Caco-2 (cell line): ENCODE measurements at regions of chr1 and their contacts with region 1.

Region 1: DNA sequence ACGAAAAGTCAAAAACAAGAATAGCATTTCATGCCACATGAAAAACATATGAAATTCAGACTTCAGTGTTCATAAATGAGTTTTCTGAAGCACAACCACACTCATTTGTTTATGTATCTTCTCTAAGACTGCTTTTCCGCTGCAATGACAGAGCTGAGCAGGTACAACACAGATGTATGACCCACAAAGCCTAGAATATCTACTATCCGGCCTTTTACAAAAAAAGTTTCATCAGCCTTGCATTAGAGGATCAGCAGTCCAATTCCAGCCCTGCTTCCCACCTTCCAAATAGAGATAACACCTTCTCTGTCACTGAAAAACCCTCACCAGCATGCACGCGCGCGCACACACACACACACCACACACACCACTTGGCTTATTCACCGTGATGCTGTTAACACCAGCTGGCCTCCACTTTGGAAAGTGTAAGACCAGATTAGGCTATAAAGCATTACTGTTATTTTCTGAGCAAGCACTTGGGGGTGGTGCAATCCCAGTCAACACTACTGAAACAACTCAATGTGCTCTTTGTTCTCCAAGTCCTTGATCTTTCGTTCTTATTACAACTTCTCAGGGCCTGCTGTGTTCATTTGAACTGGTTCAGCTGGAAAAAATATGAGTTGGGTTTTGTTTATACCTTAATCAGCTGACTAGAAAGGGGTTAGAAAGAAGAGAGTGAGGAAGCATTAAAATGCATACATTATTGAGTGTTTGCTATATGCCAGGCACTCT is 90.0 kb downstream of the GLUL start:
- DNase-seq: peak; percentile 50 to 61
- H3K4me3 ChIP-seq: no peak overlapping the region
- H3K4me3 Mint-ChIP-seq: no peak overlapping the region
- H3K27ac Mint-ChIP-seq: peak overlapping the region; percentile 29
- H3K4me1 ChIP-seq: peaks cover 30% of the 10 kb centered on the region
- H3K4me1 Mint-ChIP-seq: peaks cover 31% of the 10 kb centered on the region
- H3K27me3 ChIP-seq: no peaks in the 10 kb centered on the region
- H3K27me3 Mint-ChIP-seq: no peaks in the 10 kb centered on the region
- CTCF ChIP-seq: no peak

Region 2: GRCh38 chr1:182185813-182186756 is 115.5 kb before region 1 on chr1:
- CTCF ChIA-PET with region 1: no interaction called
- POLR2A ChIA-PET with region 1: no interaction called
- intact Hi-C with region 1: no loop called
- DNase-seq: peak in 1 of 2 experiments; percentile 23
- H3K4me3 ChIP-seq: no peak overlapping the region
- H3K4me3 Mint-ChIP-seq: no peak overlapping the region
- H3K27ac Mint-ChIP-seq: peak overlapping the region; percentile 46
- H3K4me1 ChIP-seq: peaks cover 16% of the 10 kb centered on the region
- H3K4me1 Mint-ChIP-seq: peaks cover 4% of the 10 kb centered on the region
- H3K27me3 ChIP-seq: no peaks in the 10 kb centered on the region
- H3K27me3 Mint-ChIP-seq: no peaks in the 10 kb centered on the region
- CTCF ChIP-seq: no peak

Region 3: DNA sequence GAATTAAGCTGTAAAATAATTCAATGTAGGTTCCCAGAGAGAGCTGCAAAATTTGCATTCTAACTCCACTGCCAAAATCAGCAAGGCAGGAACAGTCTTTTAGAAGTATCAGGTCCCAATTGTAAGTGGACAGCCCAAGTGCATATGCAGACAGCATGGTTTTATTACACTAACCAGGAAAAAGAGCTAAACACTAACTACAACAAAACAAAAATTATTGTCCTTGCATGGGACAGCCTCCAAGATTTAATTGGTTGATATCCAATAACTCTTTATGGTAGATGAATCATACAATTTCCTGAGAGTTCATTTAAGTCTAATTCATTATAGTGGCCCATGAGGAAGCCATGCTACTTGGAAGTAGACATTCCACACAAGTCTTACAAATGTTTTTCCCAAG is 85.9 kb before region 1 on chr1:
- CTCF ChIA-PET with region 1: no interaction called
- POLR2A ChIA-PET with region 1: no interaction called
- intact Hi-C with region 1: no loop called
- DNase-seq: no peak
- H3K4me3 ChIP-seq: no peak overlapping the region
- H3K4me3 Mint-ChIP-seq: no peak overlapping the region
- H3K27ac Mint-ChIP-seq: no peak overlapping the region
- H3K4me1 ChIP-seq: no peaks in the 10 kb centered on the region
- H3K4me1 Mint-ChIP-seq: peaks cover 23% of the 10 kb centered on the region
- H3K27me3 ChIP-seq: no peaks in the 10 kb centered on the region
- H3K27me3 Mint-ChIP-seq: no peaks in the 10 kb centered on the region
- CTCF ChIP-seq: no peak

Region 4: GRCh38 chr1:182259229-182259872 is 42.3 kb before region 1 on chr1:
- CTCF ChIA-PET with region 1: no interaction called
- POLR2A ChIA-PET with region 1: no interaction called
- intact Hi-C with region 1: no loop called
- DNase-seq: no peak
- H3K4me3 ChIP-seq: no peak overlapping the region
- H3K4me3 Mint-ChIP-seq: no peak overlapping the region
- H3K27ac Mint-ChIP-seq: no peak overlapping the region
- H3K4me1 ChIP-seq: no peaks in the 10 kb centered on the region
- H3K4me1 Mint-ChIP-seq: no peaks in the 10 kb centered on the region
- H3K27me3 ChIP-seq: no peaks in the 10 kb centered on the region
- H3K27me3 Mint-ChIP-seq: no peaks in the 10 kb centered on the region
- CTCF ChIP-seq: no peak

Region 5: DNA sequence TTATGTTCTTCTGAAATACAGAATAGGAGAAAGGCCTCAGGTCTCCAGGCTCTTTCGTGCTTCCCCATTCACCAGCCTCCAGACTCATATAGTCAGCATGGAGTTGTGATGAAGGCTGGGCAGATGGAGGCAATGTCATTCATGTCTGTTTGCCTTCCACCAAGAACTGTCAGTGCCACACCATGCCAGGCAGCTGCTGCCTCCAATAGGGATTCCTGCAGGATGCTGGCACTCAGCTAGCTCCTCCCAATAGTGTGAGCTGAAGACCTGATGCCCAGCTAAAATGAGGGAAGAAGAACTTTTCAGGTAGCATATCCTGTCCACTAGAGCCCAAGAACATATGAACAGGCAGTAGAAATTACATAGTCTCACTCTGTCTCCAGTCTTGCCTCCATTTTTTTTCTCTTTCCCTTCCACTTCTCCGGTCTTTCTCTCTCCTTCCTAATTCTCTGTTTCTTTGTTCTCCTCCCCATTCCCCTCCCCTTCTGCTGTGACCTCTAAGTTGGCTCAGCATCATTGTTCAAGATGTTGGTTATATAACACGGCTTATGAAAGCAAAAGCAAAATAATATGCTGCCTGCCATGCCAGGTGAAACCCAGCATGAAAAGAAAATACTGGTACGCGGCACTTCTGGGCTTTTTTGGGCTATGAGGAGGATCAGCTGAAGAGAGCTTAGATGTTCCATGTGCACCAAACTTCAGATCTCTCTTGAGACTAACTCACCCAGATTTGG is 72.6 kb after region 1 on chr1:
- CTCF ChIA-PET with region 1: no interaction called
- POLR2A ChIA-PET with region 1: no interaction called
- intact Hi-C with region 1: no loop called
- DNase-seq: no peak
- H3K4me3 ChIP-seq: no peak overlapping the region
- H3K4me3 Mint-ChIP-seq: no peak overlapping the region
- H3K27ac Mint-ChIP-seq: no peak overlapping the region
- H3K4me1 ChIP-seq: no peaks in the 10 kb centered on the region
- H3K4me1 Mint-ChIP-seq: no peaks in the 10 kb centered on the region
- H3K27me3 ChIP-seq: no peaks in the 10 kb centered on the region
- H3K27me3 Mint-ChIP-seq: no peaks in the 10 kb centered on the region
- CTCF ChIP-seq: no peak

Region 6: DNA sequence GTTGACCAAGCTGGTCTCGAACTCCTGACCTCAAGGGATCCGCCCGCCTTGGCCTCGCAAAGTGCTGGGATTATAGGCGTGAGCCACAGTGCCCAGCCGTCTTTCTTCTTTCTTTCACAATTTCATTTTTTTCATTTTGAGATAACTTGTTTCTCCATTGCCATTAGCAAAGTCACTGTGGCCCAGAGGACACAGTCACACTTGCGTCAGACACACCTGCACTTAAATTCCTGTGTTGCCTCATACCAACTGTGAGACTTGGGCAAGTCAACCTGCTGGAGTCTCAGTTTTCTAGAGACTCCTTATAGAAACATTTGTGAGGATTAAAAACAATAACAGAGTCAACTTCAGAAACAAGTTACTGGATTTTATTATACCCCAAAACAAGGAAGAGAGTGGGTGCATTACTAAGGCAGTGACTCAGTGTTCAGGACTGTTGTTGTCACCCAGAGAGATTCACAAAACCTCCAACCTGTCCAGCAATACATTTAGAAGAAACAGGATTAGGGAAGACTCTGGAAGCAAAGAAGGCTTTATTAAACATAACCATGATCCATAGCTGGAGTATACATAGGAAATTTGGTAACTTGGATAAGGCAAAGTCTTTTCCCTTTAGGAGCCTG is 96.2 kb after region 1 on chr1:
- CTCF ChIA-PET with region 1: interaction called, 5 read pairs
- POLR2A ChIA-PET with region 1: no interaction called
- intact Hi-C with region 1: loop called (anchors 1 kb)
- DNase-seq: peak in 1 of 2 experiments; percentile 34
- H3K4me3 ChIP-seq: no peak overlapping the region
- H3K4me3 Mint-ChIP-seq: no peak overlapping the region
- H3K27ac Mint-ChIP-seq: peak overlapping the region; percentile 62
- H3K4me1 ChIP-seq: peaks cover 23% of the 10 kb centered on the region
- H3K4me1 Mint-ChIP-seq: peaks cover 35% of the 10 kb centered on the region
- H3K27me3 ChIP-seq: no peaks in the 10 kb centered on the region
- H3K27me3 Mint-ChIP-seq: no peaks in the 10 kb centered on the region
- CTCF ChIP-seq: no peak